ENCODE measurements at regions of chr12 and their contacts with region 1.

Region 1: GRCh38 chr12:54324617-54325441 is at the start of gene COPZ1:
- DNase-seq: peak; percentile 89 to 99 (median 93)
- ATAC-seq: peak; percentile 90
- H3K4me3 ChIP-seq: peak within 1 kb of the TSS; percentile 70
- H3K27ac ChIP-seq: peak within 1 kb of the TSS; percentile 96
- H3K4me1 ChIP-seq: peaks cover 31 to 44% of the 10 kb centered on the region in 2 experiments; a peak in 4 of 5 replicates
- H3K27me3 ChIP-seq: no peaks in the 10 kb centered on the region
- CTCF ChIP-seq: peak; percentile 84 to 98 (median 87)
- EP300 ChIP-seq: peak; percentile 67
- POLR2A ChIP-seq: peak; percentile 97
- RAD21 ChIP-seq: peak; percentile 91 to 94
- polyA plus RNA-seq, gene COPZ1: 437 to 487 TPM

Region 2: GRCh38 chr12:53956251-53956887 is 368.5 kb before region 1 on chr12:
- CTCF ChIA-PET with region 1: no interaction called
- POLR2A ChIA-PET with region 1: no interaction called
- in situ Hi-C with region 1: no loop called
- intact Hi-C with region 1: no loop called
- DNase-seq: no peak
- ATAC-seq: 0 out of 3 replicates have a peak, but pooled peaks have one; percentile 20
- H3K4me3 ChIP-seq: no peak overlapping the region
- H3K27ac ChIP-seq: no peak overlapping the region
- H3K4me1 ChIP-seq: peaks cover 0 to 26% of the 10 kb centered on the region in 2 experiments; a peak in 2 of 5 replicates
- H3K27me3 ChIP-seq: peaks cover 63 to 95% of the 10 kb centered on the region in 2 experiments
- CTCF ChIP-seq: no peak
- EP300 ChIP-seq: no peak
- POLR2A ChIP-seq: no peak
- RAD21 ChIP-seq: no peak

Region 3: GRCh38 chr12:54220092-54220557 is 104.7 kb before region 1 on chr12:
- CTCF ChIA-PET with region 1: no interaction called
- POLR2A ChIA-PET with region 1: interaction called, 4 read pairs
- in situ Hi-C with region 1: no loop called
- intact Hi-C with region 1: loop called (anchors 1 kb)
- DNase-seq: peak; percentile 75 to 88 (median 78)
- ATAC-seq: peak; percentile 81
- H3K4me3 ChIP-seq: no peak overlapping the region
- H3K27ac ChIP-seq: peak overlapping the region; percentile 66
- H3K4me1 ChIP-seq: peaks cover 29 to 34% of the 10 kb centered on the region in 2 experiments; a peak in 4 of 5 replicates
- H3K27me3 ChIP-seq: no peaks in the 10 kb centered on the region
- CTCF ChIP-seq: peak; percentile 91 to 94 (median 93)
- EP300 ChIP-seq: no peak
- POLR2A ChIP-seq: no peak
- RAD21 ChIP-seq: peak; percentile 95 to 98

Region 4: DNA sequence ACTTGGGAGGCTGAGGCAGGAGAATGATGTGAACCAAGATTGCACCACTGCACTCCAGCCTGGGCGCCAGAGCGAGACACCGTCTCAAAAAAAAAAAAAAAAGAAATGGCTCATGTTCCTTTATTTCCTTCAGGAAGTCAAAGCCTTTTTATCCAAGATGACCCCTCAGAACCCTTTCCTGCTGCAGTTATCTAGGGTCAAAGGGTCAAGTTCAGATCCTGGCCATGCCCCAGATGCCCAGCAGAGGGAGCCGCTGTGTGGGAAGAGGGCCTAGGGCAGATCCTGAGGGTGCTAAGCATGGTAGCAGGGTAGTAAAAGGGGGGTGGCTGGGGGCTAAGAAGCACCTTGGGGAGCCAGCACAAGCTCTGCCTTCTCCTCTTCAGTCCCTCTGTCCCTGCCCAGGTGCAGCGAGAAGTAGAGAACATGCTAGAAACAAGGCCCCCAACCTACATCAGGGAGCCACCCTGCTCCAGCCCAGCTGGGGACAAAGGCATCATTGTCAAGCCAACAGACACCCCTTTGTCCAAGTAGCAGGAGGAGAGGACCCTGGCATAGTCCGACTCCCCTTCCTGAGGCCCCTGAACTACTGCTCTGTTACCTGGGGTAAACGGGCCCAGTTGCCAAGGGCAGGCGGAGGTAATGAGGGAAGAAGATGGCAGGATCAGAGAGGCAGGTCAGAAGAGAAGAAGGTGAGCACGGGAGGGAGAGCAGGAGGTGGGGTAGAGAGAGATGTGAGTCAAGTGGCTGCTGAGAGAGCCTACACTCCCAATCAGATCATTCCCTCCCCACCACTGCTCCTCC is 30.5 kb before region 1 on chr12:
- CTCF ChIA-PET with region 1: interaction called, 6 read pairs
- POLR2A ChIA-PET with region 1: interaction called, 55 read pairs
- in situ Hi-C with region 1: loop called (anchors 5 kb)
- intact Hi-C with region 1: loop called (anchors 1 kb)
- DNase-seq: peak; percentile 80 to 93 (median 83)
- ATAC-seq: peak; percentile 34
- H3K4me3 ChIP-seq: peak overlapping the region; percentile 53
- H3K27ac ChIP-seq: peak overlapping the region; percentile 84
- H3K4me1 ChIP-seq: peaks cover 34 to 38% of the 10 kb centered on the region in 2 experiments; a peak in 4 of 5 replicates
- H3K27me3 ChIP-seq: no peaks in the 10 kb centered on the region; a peak in 1 of 5 replicates
- CTCF ChIP-seq: peak; percentile 92 to 96 (median 93)
- EP300 ChIP-seq: peak; percentile 80
- POLR2A ChIP-seq: no peak
- RAD21 ChIP-seq: peak; percentile 92 to 94

Region 5: DNA sequence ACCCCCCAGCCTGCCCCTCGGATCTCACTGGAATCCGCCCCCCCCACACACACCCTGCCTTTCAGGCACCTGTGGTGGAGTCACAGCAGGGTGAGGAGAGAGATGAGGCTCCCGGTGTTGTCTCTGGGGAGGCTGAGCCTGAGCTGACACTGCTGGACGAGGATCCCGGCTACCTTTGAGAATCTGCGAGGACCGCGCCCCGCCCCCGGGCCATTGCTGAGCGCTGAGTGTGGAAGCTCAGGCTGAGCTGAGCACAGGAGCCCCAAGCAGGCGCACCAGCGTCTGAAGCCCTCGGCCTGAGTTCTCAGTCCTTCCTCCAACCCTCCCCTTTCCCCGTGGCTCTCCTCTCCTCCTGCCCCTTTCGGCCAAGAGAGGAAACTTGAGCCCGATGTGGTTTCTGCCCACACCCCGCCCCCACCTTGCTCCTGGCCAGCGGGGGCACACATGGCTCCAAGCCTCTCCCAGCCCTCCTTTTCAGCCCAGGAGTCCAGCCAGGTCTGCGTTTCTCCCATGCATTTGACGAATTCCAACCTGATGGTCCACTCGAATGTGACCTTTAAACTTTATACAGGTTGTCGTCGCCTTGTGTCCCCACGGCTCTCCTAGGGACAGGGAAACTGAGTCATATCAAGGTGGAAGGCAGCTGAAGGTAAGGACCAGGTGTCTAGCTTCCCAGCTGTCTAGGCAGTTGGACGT is 23.9 kb before region 1 on chr12 and contains the start of gene NFE2:
- CTCF ChIA-PET with region 1: interaction called, 5 read pairs
- POLR2A ChIA-PET with region 1: interaction called, 55 read pairs
- in situ Hi-C with region 1: no loop called
- intact Hi-C with region 1: loop called (anchors 2 kb)
- DNase-seq: peak; percentile 70 to 94 (median 74)
- ATAC-seq: peak; percentile 81
- H3K4me3 ChIP-seq: peak within 1 kb of the TSS; percentile 78
- H3K27ac ChIP-seq: peak within 1 kb of the TSS; percentile 88
- H3K4me1 ChIP-seq: peaks cover 29 to 35% of the 10 kb centered on the region in 2 experiments
- H3K27me3 ChIP-seq: no peaks in the 10 kb centered on the region
- CTCF ChIP-seq: peak; percentile 40 to 45 (median 41); a peak in 5 of 6 replicates
- EP300 ChIP-seq: 0 out of 2 replicates have a peak, but pooled peaks have one; percentile 18
- POLR2A ChIP-seq: peak; percentile 93
- RAD21 ChIP-seq: peak in 1 of 2 experiments; percentile 35; a peak in 1 of 4 replicates
- polyA plus RNA-seq, gene NFE2: 12.3 to 44.5 TPM

Region 6: DNA sequence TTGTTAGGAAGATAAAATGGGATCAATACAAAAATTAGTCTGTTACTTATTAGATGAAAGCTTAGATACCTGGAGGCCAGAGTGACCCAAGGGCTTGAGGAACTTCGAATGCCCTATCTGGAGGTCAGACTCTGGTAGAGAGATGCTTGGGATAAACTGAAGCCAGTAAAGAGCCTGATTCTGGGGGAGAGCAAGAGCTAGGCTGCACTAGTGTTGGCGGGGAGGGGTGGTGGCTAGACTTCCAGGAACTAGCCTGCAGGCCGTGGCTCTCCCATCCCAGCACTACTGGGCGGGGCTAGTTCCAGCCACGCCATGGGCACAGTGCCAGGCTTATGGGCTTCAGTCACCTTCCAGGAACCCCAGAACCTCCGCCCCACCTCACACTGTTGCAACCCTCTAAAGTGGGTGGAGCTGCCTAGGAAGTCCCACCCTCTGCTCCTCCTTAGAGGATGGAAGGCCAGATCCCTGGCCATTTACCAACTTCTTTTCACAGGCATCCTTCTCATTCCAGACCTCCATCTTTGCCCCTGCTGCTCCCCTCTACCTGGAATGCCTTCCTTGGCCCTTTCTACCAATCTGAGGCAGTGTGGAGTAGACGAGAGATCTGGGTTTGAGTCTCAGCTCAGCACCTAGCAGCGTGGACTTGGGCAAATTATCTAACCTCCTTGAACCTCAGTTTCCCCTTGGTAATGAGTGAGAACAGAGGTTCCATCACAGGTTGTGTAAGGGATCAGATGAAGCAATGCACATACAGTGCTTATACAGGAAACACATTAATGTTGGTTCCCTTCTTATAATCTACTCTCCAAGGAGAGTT is 17.7 kb before region 1 on chr12:
- CTCF ChIA-PET with region 1: interaction called, 5 read pairs
- POLR2A ChIA-PET with region 1: interaction called, 23 read pairs
- in situ Hi-C with region 1: no loop called
- intact Hi-C with region 1: loop called (anchors 2 kb)
- DNase-seq: peak; percentile 90 to 100 (median 92)
- ATAC-seq: peak; percentile 83
- H3K4me3 ChIP-seq: no peak overlapping the region
- H3K27ac ChIP-seq: peak overlapping the region; percentile 54
- H3K4me1 ChIP-seq: peaks cover 43 to 49% of the 10 kb centered on the region in 2 experiments
- H3K27me3 ChIP-seq: no peaks in the 10 kb centered on the region
- CTCF ChIP-seq: no peak
- EP300 ChIP-seq: peak; percentile 78
- POLR2A ChIP-seq: peak; percentile 64
- RAD21 ChIP-seq: peak in 1 of 2 experiments; percentile 12; a peak in 1 of 4 replicates